K562 (cell line): ENCODE measurements at regions of chr4 and their contacts with region 1.

Region 1: DNA sequence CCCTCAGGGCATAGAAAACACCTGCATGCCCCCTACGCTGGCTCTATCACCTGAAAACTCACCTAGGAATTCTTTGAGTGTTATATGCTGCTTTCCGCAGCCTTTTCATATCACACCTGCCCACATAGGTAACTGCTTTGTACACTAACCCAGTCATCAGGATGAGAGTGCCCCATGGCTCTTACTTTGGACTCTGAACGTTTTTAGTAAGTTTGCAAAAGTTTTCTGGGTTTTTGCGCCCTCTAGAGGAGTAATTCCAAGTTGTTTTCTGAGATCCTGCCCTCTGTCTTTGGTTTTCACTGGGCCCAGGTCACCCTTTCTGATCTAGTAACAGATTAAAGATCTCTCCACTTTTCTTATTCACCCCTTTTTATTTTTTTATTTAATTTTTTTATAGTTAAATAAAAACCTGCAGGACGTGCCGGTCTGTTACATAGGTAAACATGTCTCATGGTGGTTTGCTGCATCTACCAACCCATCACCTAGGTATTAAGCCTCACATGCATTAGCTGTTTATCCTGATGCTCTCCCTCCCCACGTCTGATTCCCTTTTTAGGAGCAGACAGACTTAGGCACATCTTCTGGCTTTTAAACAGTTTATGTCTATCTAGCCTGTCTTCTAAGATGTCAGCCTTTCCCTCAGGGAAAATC is 139.2 kb downstream of the NWD2 start:
- DNase-seq: peak; percentile 27 to 56 (median 42)
- ATAC-seq: peak; percentile 76; the same call in 2 of the 3 replicates
- H3K4me3 ChIP-seq: no peak overlapping the region
- H3K27ac ChIP-seq: no peak overlapping the region
- H3K4me1 ChIP-seq: no peaks in the 10 kb centered on the region
- H3K27me3 ChIP-seq: no peaks in the 10 kb centered on the region
- CTCF ChIP-seq: peak; percentile 61 to 86 (median 74)
- EP300 ChIP-seq: no peak
- POLR2A ChIP-seq: no peak
- RAD21 ChIP-seq: peak; percentile 25 to 55; a peak in 3 of 4 replicates

Region 2: GRCh38 chr4:36351082-36351666 is 1032.5 kb before region 1 on chr4:
- CTCF ChIA-PET with region 1: no interaction called
- POLR2A ChIA-PET with region 1: no interaction called
- in situ Hi-C with region 1: loop called (anchors 25 kb)
- intact Hi-C with region 1: loop called (anchors 2 kb)
- DNase-seq: peak; percentile 17 to 52 (median 23)
- ATAC-seq: 0 out of 3 replicates have a peak, but pooled peaks have one; percentile 53
- H3K4me3 ChIP-seq: no peak overlapping the region
- H3K27ac ChIP-seq: no peak overlapping the region
- H3K4me1 ChIP-seq: no peaks in the 10 kb centered on the region
- H3K27me3 ChIP-seq: no peaks in the 10 kb centered on the region
- CTCF ChIP-seq: peak; percentile 38 to 66 (median 44); a peak in 5 of 6 replicates
- EP300 ChIP-seq: no peak
- POLR2A ChIP-seq: no peak
- RAD21 ChIP-seq: peak; percentile 55 to 62

Region 3: DNA sequence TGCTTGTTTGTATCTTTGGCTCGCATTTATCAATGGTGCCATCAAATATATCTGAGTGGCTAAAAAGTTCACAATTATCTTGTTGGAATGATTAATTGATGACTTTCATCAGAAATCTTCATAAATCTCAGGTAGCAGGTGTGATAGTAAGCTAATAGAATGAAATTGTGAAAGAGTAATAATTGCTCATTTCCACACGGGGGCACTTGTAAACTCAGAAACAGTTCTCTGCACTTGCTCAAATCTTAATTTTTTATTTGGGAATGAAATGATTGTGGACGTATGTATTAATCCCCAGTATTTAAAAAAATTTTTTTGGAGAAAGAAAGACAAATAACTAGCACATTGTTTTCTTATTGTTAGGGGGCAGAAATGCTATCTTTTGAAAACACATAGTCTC is 969.5 kb before region 1 on chr4:
- CTCF ChIA-PET with region 1: no interaction called
- POLR2A ChIA-PET with region 1: no interaction called
- in situ Hi-C with region 1: no loop called
- intact Hi-C with region 1: loop called (anchors 5 kb)
- DNase-seq: no peak
- ATAC-seq: no peak
- H3K4me3 ChIP-seq: no peak overlapping the region
- H3K27ac ChIP-seq: no peak overlapping the region
- H3K4me1 ChIP-seq: no peaks in the 10 kb centered on the region
- H3K27me3 ChIP-seq: no peaks in the 10 kb centered on the region
- CTCF ChIP-seq: peak in 1 of 3 experiments; percentile 26; a peak in 2 of 6 replicates
- EP300 ChIP-seq: no peak
- POLR2A ChIP-seq: no peak
- RAD21 ChIP-seq: peak in 1 of 2 experiments; percentile 30; a peak in 1 of 4 replicates